ENCODE measurements at regions of chr6 and their contacts with region 1.

Region 1: GRCh38 chr6:63352587-63353285 is 33.0 kb upstream of the LGSN start:
- DNase-seq: no peak
- H3K4me3 Mint-ChIP-seq: peak overlapping the region; percentile 5
- H3K27ac Mint-ChIP-seq: no peak overlapping the region
- H3K4me1 Mint-ChIP-seq: peaks cover 13% of the 10 kb centered on the region
- H3K27me3 Mint-ChIP-seq: peaks cover 13% of the 10 kb centered on the region

Region 2: DNA sequence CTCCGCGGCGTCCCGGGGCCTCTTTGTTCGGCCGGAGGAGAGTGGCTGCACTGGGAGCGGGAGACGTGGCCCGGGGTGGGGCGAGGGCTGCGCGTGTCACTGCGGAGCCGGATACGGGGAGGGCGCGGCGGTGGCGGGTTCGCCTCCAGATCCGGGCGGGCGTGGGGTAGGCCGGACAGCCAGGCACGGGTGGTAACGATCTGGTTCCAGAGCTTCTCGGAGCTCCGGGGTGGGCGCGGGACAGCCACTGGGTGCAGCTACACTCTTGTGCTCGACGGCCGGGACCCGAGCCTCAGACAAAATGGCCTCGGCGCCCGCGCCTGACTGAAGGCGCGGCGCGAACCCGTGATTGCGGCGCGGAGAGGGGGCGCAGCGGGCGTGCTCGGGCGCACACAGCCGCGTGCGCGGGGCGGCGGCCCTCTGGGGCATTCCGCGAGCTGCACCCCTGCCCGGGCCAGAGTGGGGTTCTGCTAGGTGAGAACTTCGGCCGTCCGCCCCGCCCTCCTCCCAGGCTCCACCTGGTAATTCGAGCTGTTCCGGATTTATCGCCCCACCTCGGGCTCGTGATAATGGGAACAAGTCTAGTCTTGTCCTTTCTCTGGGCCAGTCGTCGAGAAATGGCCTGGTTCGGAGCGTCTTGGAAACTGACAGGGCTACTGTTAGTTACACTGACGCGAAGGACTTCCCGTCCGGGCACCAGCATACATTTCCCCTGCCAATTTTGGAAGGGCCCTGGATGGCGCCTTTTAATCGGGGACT is 220.6 kb after region 1 on chr6:
- CTCF ChIA-PET with region 1: interaction called, 11 read pairs
- DNase-seq: peak; percentile 82
- H3K4me3 Mint-ChIP-seq: peak overlapping the region; percentile 85
- H3K27ac Mint-ChIP-seq: peak overlapping the region; percentile 95
- H3K4me1 Mint-ChIP-seq: peaks cover 38% of the 10 kb centered on the region
- H3K27me3 Mint-ChIP-seq: peaks cover 4% of the 10 kb centered on the region

Region 3: GRCh38 chr6:63598049-63599036 is 245.6 kb after region 1 on chr6:
- CTCF ChIA-PET with region 1: interaction called, 27 read pairs
- DNase-seq: peak; percentile 81
- H3K4me3 Mint-ChIP-seq: peak overlapping the region; percentile 77
- H3K27ac Mint-ChIP-seq: no peak overlapping the region
- H3K4me1 Mint-ChIP-seq: peaks cover 20% of the 10 kb centered on the region
- H3K27me3 Mint-ChIP-seq: peaks cover 21% of the 10 kb centered on the region

Region 4: DNA sequence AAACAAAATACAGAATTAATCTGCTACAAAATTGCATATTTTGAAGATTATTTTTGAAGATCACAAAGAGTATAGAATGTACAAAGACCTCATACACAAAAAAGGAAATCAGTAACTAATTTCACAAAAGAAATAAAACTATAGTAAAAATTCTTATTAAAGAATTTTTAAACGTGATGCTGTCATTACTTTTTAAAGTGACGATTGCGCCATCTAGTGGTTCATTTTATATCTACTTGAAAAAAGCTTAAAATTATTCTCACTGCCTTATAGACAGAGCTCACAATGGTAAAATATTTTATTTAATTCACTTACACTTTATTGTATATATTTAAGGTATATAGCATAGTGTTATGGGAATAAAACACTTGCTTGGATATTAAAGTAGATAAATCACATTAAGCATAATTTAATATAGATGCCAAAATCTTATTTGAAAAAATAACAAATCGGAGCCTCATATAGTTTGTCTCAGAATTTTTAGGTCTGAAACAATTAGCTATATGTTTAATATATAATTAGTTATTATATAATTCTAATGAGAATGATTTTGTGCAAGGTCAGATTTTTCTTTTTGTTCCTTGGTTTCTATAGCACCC is 411.7 kb after region 1 on chr6:
- CTCF ChIA-PET with region 1: interaction called, 44 read pairs
- DNase-seq: no peak
- H3K4me3 Mint-ChIP-seq: no peak overlapping the region
- H3K27ac Mint-ChIP-seq: no peak overlapping the region
- H3K4me1 Mint-ChIP-seq: no peaks in the 10 kb centered on the region
- H3K27me3 Mint-ChIP-seq: peaks cover 12% of the 10 kb centered on the region

Region 5: DNA sequence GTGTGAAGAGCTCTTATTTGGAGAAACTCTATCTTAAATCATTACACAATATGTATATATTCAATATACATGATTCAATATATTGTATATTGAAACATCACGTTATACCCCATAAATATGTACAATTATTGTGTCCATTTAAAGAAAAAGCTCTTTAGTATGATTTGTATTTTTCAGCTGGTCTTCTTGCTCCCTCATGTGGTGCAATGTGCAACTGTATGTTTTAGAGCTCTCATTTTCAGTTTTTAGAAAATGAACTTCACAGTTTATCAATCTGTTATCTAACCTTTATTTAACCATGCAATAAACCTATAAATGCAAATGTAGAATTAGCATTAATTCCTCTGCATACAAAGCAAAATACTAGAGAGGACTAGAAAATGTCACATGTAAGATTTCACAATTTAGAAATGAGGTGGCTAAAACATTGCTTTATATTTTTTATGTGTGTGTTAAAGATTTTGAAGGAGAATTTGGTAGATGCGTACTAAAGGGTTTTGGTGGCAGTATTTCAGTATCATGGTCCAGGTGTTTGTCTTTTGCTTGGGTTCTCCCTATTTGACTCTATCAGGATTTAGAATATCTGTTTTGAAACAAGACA is 450.0 kb after region 1 on chr6:
- CTCF ChIA-PET with region 1: interaction called, 20 read pairs
- DNase-seq: no peak
- H3K4me3 Mint-ChIP-seq: no peak overlapping the region
- H3K27ac Mint-ChIP-seq: no peak overlapping the region
- H3K4me1 Mint-ChIP-seq: no peaks in the 10 kb centered on the region
- H3K27me3 Mint-ChIP-seq: no peaks in the 10 kb centered on the region

Measured in activated naive CD4-positive, alpha-beta T cell treated with anti-CD3 and anti-CD28 coated beads, Interleukin-2, amount 10 ng/mL, durations not matched to agents 7 days and 5 days (primary cell).